Heart right ventricle (tissue), 16 donors: ENCODE measurements at regions of chr10 and their contacts with region 1.

Region 1: GRCh38 chr10:13160934-13161856 is at the start of gene MCM10:
- DNase-seq: peak; percentile 96 to 99
- ATAC-seq: peak; percentile 100
- H3K4me3 ChIP-seq: peak within 1 kb of the TSS in 9 of 10 donors; percentile 17 to 64 (median 50)
- H3K27ac ChIP-seq: peak within 1 kb of the TSS in 1 of 10 donors; percentile 24
- H3K4me1 ChIP-seq: peaks cover 0 to 16% (median 13%) of the 10 kb centered on the region in 9 donors
- H3K27me3 ChIP-seq: no peaks in the 10 kb centered on the region
- CTCF ChIP-seq: peak; percentile 70 to 97 (median 92)
- total RNA-seq, gene MCM10: 0.07 to 3.8 (median 0.48) TPM in 7 of 10 donors, not detected in the others

Region 2: GRCh38 chr10:13299437-13300287 is 138.5 kb after region 1 on chr10 and contains the start of gene PHYH:
- intact Hi-C with region 1: loop called in 9 of 10 experiments (anchors 1 to 10 kb)
- DNase-seq: peak; percentile 91 to 94
- ATAC-seq: peak; percentile 89 to 96 (median 94)
- H3K4me3 ChIP-seq: peak within 1 kb of the TSS; percentile 68 to 93 (median 80)
- H3K27ac ChIP-seq: peak within 1 kb of the TSS; percentile 96 to 100 (median 100)
- H3K4me1 ChIP-seq: peaks cover 0 to 36% (median 22%) of the 10 kb centered on the region in 9 donors
- H3K27me3 ChIP-seq: no peaks in the 10 kb centered on the region
- CTCF ChIP-seq: no peak
- total RNA-seq, gene PHYH: 97.3 to 188 (median 162) TPM

Region 3: DNA sequence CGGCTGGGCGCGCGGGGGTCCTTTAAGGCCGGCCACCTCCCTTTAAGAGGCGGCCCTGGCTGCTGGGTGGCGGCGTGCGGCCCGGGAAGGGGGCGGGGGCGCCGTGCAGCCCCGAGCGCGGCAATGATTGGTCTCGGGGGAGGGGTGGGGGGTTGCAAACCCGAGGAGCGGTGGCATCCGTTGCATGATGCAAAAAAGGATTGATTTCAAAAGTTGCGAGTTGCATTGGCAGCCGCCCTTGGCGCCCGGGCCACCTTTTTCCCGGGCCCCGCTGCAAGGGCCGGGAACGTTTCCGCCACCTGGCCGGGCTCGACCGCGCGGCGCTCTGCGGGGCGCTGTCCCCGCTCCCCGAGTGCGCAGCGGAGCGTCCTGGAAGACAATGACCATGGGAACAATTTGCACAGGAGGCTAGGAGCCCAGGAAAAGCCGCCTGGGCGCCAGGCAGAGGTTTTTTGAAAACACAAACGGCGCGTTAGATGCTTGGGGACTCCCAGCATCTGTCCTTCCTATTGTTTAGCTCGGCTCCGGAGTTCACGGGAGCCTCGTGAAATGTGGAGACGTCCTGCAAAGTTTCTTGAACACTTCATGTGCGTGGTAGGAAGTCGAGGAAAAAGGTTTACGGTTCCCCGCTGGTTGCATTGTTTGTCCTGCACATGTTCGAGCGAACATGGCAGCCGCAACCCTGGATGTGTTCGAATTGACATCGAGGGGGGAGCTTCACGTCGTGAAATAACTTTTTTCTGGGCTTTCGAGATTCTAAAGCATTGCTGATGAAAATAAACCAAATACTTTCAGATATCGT is 187.2 kb after region 1 on chr10 and contains the start of gene SEPHS1:
- intact Hi-C with region 1: loop called in 1 of 10 experiments (anchors 5 kb)
- DNase-seq: peak; percentile 68 to 74
- ATAC-seq: peak; percentile 61 to 88 (median 78)
- H3K4me3 ChIP-seq: peak within 1 kb of the TSS; percentile 64 to 95 (median 86)
- H3K27ac ChIP-seq: peak within 1 kb of the TSS; percentile 92 to 99 (median 98)
- H3K4me1 ChIP-seq: peaks cover 0 to 37% (median 34%) of the 10 kb centered on the region in 9 donors
- H3K27me3 ChIP-seq: peaks cover 0 to 27% (median 23%) of the 10 kb centered on the region in 7 donors
- CTCF ChIP-seq: peak in 3 of 9 donors; percentile 14 to 26 (median 16)
- total RNA-seq, gene SEPHS1: 26.7 to 38.9 (median 30.4) TPM

Region 4: GRCh38 chr10:13440185-13441061 is 279.2 kb after region 1 on chr10:
- intact Hi-C with region 1: loop called in 3 of 10 experiments (anchors 2 to 10 kb)
- DNase-seq: peak; percentile 40 to 51
- ATAC-seq: peak; percentile 71 to 89 (median 80)
- H3K4me3 ChIP-seq: peak overlapping the region in 9 of 10 donors; percentile 21 to 48 (median 40)
- H3K27ac ChIP-seq: no peak overlapping the region
- H3K4me1 ChIP-seq: peaks cover 8 to 16% (median 14%) of the 10 kb centered on the region in 9 donors
- H3K27me3 ChIP-seq: peaks cover 0 to 53% (median 26%) of the 10 kb centered on the region in 7 donors
- CTCF ChIP-seq: peak; percentile 73 to 94 (median 88)

Region 5: DNA sequence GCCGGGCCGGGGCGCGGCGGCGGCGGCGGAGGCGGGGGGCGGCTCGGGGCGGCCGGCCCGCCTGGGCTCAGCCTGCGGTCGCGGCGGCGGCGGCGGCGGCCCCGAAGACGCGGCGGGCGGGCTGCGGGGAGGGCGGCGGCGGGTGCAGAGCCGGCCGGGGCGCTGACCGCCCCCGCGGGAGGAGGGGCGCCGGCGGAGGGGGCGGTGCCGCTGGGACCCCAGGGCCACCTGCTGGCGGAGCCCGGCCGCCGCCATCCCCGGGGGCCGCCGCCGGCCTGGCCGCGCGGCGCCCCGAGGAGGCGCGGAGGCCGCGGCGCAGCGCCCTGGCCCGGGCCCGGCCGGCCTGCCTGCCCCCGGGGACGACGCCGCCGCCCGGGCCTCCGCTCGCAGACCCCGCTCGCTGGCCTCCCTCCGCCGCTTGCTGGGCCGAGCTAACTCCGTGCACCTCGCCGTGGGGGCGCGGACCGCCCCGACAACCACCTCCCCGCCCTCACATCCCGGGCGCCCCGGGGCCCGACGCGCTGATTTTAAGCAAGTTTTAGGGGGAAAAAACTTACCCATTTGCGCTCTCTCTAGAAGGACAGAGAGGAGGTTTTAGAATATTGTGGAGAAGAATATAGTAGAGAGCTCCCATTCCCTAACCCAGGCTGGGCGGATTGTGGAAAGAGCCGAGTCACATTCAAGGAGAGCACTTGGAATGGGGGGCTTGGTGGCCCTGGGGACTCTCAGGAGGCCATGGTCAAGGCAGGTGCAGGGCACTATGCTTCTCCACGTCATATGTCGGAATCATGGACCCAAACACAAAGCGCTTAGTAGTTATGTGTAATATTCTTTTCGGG is 367.9 kb after region 1 on chr10 and contains the start of gene BEND7:
- intact Hi-C with region 1: loop called in 2 of 10 experiments (anchors 5 kb)
- DNase-seq: peak; percentile 27 to 67
- ATAC-seq: peak; percentile 77 to 91 (median 90)
- H3K4me3 ChIP-seq: peak within 1 kb of the TSS; percentile 44 to 89 (median 70)
- H3K27ac ChIP-seq: peak within 1 kb of the TSS; percentile 5 to 88 (median 69)
- H3K4me1 ChIP-seq: peaks cover 0 to 31% (median 18%) of the 10 kb centered on the region in 9 donors
- H3K27me3 ChIP-seq: peaks cover 0 to 62% (median 0%) of the 10 kb centered on the region in 7 donors
- CTCF ChIP-seq: no peak
- total RNA-seq, gene BEND7: 10.2 to 21.0 (median 13.3) TPM

Region 6: DNA sequence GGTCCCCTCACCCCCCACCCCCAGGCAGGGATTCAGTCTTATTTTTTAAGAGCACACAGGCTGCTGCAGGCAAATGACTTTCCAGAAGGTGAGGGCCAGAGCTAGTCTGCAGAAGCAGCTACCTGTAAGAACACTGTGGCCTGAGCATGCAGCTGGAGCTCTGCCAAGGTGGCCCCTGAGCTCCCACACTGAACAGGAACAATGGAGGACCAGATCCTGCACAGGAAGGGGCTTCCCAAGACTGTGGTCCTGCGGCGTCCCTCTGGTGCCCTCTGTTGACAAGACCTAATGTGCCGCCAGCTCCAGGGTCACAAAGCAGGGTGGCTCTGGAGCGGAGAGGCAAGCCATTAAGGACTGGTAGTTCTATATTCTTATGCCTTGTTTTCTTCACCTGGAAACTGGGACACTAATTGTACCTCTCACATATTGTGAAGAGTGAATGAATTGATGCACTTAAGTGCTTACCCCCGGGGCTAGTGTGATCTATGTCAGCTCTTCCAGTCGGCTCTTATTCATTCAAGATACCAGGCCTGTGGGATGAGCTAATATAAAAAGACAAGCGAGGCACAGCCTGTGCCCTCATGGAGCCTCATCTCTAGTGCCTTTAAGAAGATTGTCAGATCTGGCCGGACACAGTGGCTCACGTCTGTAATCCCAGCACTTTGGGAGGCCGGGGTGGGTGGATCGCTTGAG is 375.6 kb after region 1 on chr10:
- intact Hi-C with region 1: loop called in 1 of 10 experiments (anchors 5 kb)
- DNase-seq: peak; percentile 43 to 46
- ATAC-seq: peak; percentile 58 to 83 (median 75)
- H3K4me3 ChIP-seq: no peak overlapping the region
- H3K27ac ChIP-seq: no peak overlapping the region
- H3K4me1 ChIP-seq: peaks cover 0 to 3% (median 0%) of the 10 kb centered on the region in 9 donors
- H3K27me3 ChIP-seq: peaks cover 0 to 30% (median 19%) of the 10 kb centered on the region in 7 donors
- CTCF ChIP-seq: peak; percentile 40 to 70 (median 62)